Naive thymus-derived CD4-positive, alpha-beta T cell (primary cell): ENCODE measurements at regions of chr10 and their contacts with region 1.

Region 1: DNA sequence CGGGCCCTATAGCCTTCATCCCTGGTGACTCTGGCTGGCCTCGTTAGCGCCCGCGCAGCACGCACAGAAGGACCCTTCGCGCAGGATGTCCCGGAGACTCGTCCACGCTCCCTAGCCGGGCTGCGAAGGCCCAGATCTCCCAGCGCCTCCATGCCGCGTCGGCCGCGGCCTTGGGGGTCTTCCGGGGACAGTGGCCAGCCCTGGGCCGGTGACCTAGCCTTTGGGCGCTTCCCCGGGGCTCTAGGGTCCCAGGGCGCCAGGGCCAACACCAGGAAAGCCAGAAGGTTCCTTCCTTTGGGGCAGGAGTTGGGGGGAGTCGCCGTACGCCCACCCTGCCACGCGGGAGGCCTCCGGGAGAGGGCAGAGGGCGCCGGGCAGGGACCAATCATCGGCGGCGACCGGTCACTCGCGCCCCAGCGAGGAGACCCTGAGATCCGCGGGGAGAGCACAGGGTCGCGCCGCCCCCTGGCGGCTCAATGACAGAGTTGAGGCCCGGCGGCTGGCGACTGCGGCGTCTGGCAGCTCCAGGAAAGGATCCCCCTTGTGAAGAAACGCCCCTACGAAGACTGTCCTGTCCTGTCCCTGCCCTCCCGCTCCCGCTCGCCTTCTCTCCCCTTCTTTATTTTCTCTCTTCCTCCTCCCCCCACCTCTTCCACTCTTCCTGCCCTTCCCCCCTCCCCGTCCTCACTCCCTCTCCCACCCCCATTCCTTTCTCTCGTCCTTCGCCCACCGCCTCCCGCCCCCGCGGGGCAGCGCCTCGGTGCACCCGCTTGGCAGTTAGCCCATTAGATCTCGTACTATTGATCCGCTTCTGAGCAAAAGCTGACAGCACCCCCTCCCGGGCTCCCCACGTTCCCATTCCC is 62.3 kb upstream of the LBX1 start:
- DNase-seq: peak in 5 of 9 donors; percentile 22 to 29 (median 25)
- ATAC-seq: peak; percentile 60
- H3K4me3 ChIP-seq: peak overlapping the region; percentile 41
- H3K4me3 Mint-ChIP-seq: peak overlapping the region; percentile 73 to 92 (median 84)
- H3K27ac ChIP-seq: no peak overlapping the region
- H3K27ac Mint-ChIP-seq: no peak overlapping the region
- H3K4me1 ChIP-seq: peaks cover 0 to 10% of the 10 kb centered on the region in 2 donors
- H3K4me1 Mint-ChIP-seq: peaks cover 0 to 12% (median 7%) of the 10 kb centered on the region in 7 donors
- H3K27me3 ChIP-seq: peaks cover 11 to 15% of the 10 kb centered on the region in 2 donors
- H3K27me3 Mint-ChIP-seq: peaks cover 69 to 87% (median 79%) of the 10 kb centered on the region in 5 donors

Region 2: GRCh38 chr10:101161494-101162299 is 129.9 kb before region 1 on chr10:
- CTCF ChIA-PET with region 1: no interaction called
- POLR2A ChIA-PET with region 1: no interaction called
- intact Hi-C with region 1: loop called in 1 of 2 experiments (anchors 1 kb)
- DNase-seq: peak; percentile 45 to 71 (median 65)
- ATAC-seq: peak; percentile 96
- H3K4me3 ChIP-seq: no peak overlapping the region
- H3K4me3 Mint-ChIP-seq: peak overlapping the region in 5 of 10 donors; percentile 20 to 51 (median 30)
- H3K27ac ChIP-seq: no peak overlapping the region
- H3K27ac Mint-ChIP-seq: peak overlapping the region in 1 of 9 donors; percentile 26
- H3K4me1 ChIP-seq: no peaks in the 10 kb centered on the region
- H3K4me1 Mint-ChIP-seq: peaks cover 9 to 16% (median 12%) of the 10 kb centered on the region in 7 donors
- H3K27me3 ChIP-seq: peaks cover 6 to 15% of the 10 kb centered on the region in 2 donors
- H3K27me3 Mint-ChIP-seq: peaks cover 49 to 78% (median 70%) of the 10 kb centered on the region in 5 donors